Ovary (tissue), 10 donors: ENCODE measurements at regions of chr12 and their contacts with region 1.

Region 1: DNA sequence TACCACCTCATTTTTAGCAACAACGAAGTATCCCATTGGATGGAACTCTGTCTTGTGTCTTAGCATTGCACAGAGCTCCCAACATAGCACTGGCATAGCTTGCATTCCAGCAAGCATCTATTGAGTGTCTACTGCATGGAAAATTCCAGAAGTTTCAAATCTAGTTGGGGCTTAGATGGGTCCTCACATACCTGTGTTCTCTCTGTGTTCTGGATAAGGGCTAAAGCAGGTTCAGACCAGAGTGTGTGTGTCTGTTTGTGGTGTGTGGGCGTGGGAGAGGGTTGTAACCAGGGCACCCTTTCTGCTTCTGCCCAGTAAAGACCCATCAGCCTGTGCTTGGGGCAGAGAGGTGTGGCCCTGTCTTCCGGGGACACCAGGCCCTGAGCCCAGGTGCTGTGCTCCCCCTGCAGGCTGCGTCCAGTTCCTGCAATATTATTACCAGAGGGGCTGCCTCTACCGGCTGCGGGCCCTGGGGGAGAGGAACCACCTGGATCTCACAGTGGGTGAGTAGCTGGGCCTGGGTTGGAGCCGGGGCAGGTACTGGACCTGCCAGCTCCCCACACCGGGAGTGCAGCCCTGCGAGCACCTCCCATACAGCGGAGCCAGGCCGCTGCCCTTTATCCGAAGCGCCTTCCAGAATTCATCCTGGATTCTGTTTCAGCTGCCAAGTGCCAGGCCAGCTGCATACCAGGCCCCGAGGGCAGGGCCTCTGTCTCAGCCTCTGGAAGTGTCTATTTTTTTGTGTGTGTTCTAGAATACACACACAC is 20.3 kb downstream of the RHOF start:
- DNase-seq: peak in 4 of 5 donors; percentile 50 to 77 (median 63)
- H3K4me3 ChIP-seq: no peak overlapping the region
- H3K27ac ChIP-seq: no peak overlapping the region
- H3K4me1 ChIP-seq: no peaks in the 10 kb centered on the region
- H3K27me3 ChIP-seq: no peaks in the 10 kb centered on the region
- CTCF ChIP-seq: peak; percentile 59 to 61 (median 60)
- EP300 ChIP-seq: no peak
- POLR2A ChIP-seq: no peak

Region 2: DNA sequence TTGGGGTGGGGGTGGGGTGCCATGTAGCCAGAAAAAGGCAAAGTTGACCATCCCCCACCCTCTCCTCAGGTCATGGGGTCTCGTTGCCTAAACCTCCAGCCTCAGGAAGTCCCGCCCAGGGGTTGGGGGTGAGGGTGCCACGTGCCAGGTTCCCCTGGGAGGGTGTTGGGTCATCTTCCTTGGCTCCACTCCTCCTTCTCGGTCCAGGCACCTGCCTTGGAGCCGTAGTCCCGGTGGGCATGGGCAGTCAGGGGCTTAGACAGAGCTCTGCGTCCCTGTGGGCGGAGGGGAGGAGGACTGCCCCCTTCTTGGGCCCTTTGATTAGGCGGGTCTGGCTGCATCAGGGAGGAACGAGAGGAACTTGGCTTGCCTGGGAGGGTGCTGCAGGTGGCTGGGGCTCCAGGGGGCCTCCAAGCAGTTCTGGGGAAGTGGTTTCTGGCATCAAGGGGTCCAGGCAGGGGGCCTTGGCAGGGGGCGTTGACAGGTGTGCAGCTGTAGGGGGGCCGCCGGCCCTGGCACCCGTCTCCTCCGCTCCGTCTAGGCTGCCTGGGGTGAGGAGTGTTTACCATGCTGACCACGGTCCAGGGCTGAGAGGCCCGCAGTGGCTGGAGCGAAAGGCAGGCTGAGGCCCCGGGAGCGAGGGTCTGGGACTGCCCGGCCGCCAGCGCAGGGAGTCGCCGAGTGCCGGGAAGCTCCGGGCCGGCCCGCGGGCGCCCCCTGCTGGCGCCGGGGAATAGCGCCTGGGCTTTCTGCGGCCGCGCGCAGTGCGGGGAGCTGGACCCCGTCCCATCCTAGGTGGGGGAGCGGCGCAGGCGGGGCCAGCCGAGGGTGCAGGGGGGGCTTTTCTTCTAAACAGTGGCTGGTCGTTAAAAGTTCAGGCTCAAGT is 38.5 kb after region 1 on chr12:
- intact Hi-C with region 1: loop called in 1 of 4 experiments (anchors 1 kb)
- DNase-seq: peak; percentile 77 to 87 (median 80)
- H3K4me3 ChIP-seq: peak overlapping the region; percentile 46
- H3K27ac ChIP-seq: peak overlapping the region; percentile 47 to 76
- H3K4me1 ChIP-seq: peaks cover 2% of the 10 kb centered on the region
- H3K27me3 ChIP-seq: no peaks in the 10 kb centered on the region
- CTCF ChIP-seq: peak; percentile 96 to 98 (median 98)
- EP300 ChIP-seq: no peak
- POLR2A ChIP-seq: no peak